ENCODE measurements at regions of chr9 and their contacts with region 1.

Region 1: DNA sequence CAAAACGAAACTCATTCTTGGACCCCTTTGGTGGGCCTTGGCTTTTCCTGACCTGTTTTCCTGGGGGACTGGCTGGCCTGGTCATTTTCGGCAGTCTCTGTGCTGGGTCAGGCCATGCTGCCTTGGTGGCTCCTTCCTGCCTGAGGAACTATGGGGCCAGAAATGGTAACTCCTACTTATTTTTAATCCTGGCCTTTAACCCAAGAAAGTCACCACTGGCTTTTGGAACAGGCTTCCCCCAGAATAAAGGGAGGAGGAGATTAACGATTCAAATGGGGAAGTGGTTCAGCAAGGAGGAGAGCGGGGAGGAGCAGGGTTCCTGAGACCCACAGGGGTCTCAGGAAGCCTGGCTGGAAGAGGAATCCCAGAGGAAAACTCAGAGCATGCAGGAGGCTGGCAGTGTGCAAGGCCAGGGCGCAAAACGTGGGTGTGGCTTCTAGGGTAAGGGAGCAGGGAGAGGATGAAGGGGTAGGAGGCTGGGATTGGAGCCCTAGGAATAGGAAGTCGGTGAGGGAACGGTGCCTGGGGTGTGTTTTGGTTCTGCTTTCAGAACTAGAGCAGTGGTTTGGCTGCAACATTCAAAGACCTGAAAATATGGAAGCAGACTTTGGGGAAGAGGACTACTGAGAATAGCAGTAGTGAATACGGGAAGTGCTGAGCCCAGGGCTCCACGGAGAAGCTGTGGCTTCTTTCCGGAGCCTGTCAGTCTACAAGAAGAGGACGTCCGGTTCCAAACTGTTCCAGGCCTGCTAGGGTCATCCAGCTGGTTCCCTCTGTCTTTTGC is 271.1 kb upstream of the KLF4 start:
- DNase-seq: peak; percentile 89 to 98 (median 94)
- H3K4me3 ChIP-seq: peak overlapping the region in 1 of 3 experiments; percentile 67
- H3K4me3 Mint-ChIP-seq: peak overlapping the region; percentile 67 to 85
- H3K27ac ChIP-seq: peak overlapping the region; percentile 82 to 87
- H3K27ac Mint-ChIP-seq: peak overlapping the region; percentile 91 to 99 (median 98)
- H3K4me1 ChIP-seq: peaks cover 53 to 62% of the 10 kb centered on the region in 2 donors
- H3K4me1 Mint-ChIP-seq: peaks cover 50% of the 10 kb centered on the region
- H3K27me3 ChIP-seq: no peaks in the 10 kb centered on the region
- H3K27me3 Mint-ChIP-seq: peaks cover 0 to 3% (median 0%) of the 10 kb centered on the region in 3 donors
- CTCF ChIP-seq: no peak

Region 2: GRCh38 chr9:107847978-107848964 is 87.6 kb after region 1 on chr9:
- intact Hi-C with region 1: loop called in 1 of 2 experiments (anchors 10 kb)
- DNase-seq: peak; percentile 46 to 85 (median 59)
- H3K4me3 ChIP-seq: peak overlapping the region; percentile 13 to 61 (median 36)
- H3K4me3 Mint-ChIP-seq: peak overlapping the region; percentile 40 to 76
- H3K27ac ChIP-seq: peak overlapping the region; percentile 88 to 93
- H3K27ac Mint-ChIP-seq: peak overlapping the region; percentile 84 to 97 (median 94)
- H3K4me1 ChIP-seq: peaks cover 45 to 66% of the 10 kb centered on the region in 2 donors
- H3K4me1 Mint-ChIP-seq: peaks cover 60% of the 10 kb centered on the region
- H3K27me3 ChIP-seq: no peaks in the 10 kb centered on the region
- H3K27me3 Mint-ChIP-seq: peaks cover 0 to 1% (median 0%) of the 10 kb centered on the region in 3 donors
- CTCF ChIP-seq: no peak